PC-9 (cell line): ENCODE measurements at regions of chr12 and their contacts with region 1.

Region 1: DNA sequence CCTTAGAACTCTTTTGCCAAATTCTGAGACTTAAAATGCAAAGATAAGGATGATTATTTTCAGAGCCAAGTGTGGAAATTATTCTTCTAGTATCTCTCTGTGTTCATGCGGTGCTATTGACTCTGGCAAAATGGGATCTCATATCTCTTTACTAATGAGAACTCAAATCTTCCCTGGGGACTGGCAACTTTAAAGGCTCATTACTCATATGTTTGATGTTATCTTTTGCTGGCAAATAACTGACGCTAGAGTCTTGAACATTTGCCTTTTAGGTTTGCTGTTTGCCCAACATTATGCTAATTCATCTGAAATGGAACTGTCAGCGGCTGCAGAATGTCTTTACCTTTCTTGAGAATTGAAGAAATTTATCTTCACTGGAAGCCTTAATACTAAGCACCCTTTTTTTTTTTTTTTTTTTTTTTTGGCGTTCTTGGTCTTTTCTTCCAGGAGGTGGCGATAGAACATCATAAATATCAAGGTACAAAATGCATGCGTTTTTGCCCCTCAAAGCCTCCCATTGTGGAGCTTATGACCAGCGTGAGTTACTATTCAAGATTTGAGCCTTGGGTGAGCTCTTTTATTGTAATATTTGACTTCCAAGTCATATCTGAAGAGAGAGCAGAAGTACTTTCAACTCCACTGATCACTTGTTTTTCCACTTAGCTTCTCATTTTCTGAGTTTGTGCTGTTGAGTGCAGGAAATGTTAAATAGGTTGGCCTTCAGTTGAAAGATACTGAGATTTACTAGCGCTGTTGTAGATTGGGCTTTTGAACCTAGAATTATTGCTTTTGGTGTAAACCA is 86.6 kb downstream of the CAND1 start:
- DNase-seq: peak; percentile 15 to 68
- H3K4me3 ChIP-seq: no peak overlapping the region
- H3K27ac ChIP-seq: no peak overlapping the region
- H3K4me1 ChIP-seq: peaks cover 31% of the 10 kb centered on the region
- H3K27me3 ChIP-seq: no peaks in the 10 kb centered on the region
- CTCF ChIP-seq: peak; percentile 84

Region 2: DNA sequence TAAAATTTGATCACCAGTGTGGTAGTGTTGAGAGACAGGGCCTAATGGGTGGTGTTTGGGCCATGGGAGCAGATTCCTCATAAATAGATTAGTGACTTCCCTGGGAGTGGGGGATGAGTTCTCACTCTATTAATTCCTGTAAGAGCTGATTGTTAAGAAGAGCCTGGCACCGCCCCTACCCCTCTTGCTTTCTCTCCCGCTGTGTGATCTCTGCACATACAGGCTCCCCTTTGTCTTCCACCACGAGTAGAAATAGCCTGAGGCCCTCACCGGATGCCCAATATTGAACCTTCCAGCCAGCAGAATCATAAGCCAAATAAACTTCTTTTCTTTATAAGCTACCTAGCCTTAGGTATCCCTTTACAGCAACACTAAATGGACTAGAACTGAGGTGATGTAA is 118.5 kb before region 1 on chr12:
- CTCF ChIA-PET with region 1: no interaction called
- POLR2A ChIA-PET with region 1: no interaction called
- intact Hi-C with region 1: no loop called
- DNase-seq: no peak
- H3K4me3 ChIP-seq: no peak overlapping the region
- H3K27ac ChIP-seq: no peak overlapping the region
- H3K4me1 ChIP-seq: no peaks in the 10 kb centered on the region
- H3K27me3 ChIP-seq: no peaks in the 10 kb centered on the region
- CTCF ChIP-seq: no peak

Region 3: DNA sequence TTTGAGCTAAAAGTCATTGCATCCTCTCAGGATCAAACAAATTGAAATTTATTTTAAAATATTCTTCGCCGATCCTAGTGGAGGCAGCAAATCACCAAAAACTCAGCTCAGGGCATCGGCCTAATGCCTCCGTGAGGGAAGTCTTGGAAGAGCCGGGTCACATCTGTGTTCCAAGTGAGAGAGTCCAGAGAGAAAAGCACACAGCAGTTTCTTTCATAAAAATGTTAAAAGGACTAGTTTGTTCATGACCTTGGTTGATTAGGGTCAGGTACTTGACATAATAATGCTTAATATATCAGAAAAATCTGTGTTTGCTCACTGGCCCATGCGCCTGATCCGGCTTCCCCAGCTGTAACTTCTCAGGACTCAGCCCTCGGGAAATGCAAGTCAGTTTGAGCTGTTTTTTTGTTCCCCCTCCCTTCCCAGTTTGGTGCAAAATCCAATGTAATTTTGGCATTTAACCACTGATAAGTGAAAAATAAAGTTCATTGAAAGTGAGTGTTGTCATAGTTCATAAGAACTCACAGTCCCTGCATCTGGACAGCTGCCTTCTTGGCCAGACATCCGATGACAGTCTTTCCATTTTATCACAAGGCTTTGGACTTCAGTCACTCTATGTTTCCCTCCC is 75.0 kb after region 1 on chr12:
- CTCF ChIA-PET with region 1: interaction called, 14 read pairs
- POLR2A ChIA-PET with region 1: no interaction called
- intact Hi-C with region 1: no loop called
- DNase-seq: no peak
- H3K4me3 ChIP-seq: no peak overlapping the region
- H3K27ac ChIP-seq: no peak overlapping the region
- H3K4me1 ChIP-seq: peaks cover 40% of the 10 kb centered on the region
- H3K27me3 ChIP-seq: no peaks in the 10 kb centered on the region
- CTCF ChIP-seq: no peak

Region 4: GRCh38 chr12:67482751-67483671 is 127.2 kb after region 1 on chr12:
- CTCF ChIA-PET with region 1: no interaction called
- POLR2A ChIA-PET with region 1: no interaction called
- intact Hi-C with region 1: loop called (anchors 1 kb)
- DNase-seq: peak; percentile 55 to 78
- H3K4me3 ChIP-seq: peak overlapping the region; percentile 19; the same call in 1 of the 2 replicates
- H3K27ac ChIP-seq: peak overlapping the region; percentile 92
- H3K4me1 ChIP-seq: peaks cover 64% of the 10 kb centered on the region
- H3K27me3 ChIP-seq: no peaks in the 10 kb centered on the region
- CTCF ChIP-seq: no peak

Region 5: DNA sequence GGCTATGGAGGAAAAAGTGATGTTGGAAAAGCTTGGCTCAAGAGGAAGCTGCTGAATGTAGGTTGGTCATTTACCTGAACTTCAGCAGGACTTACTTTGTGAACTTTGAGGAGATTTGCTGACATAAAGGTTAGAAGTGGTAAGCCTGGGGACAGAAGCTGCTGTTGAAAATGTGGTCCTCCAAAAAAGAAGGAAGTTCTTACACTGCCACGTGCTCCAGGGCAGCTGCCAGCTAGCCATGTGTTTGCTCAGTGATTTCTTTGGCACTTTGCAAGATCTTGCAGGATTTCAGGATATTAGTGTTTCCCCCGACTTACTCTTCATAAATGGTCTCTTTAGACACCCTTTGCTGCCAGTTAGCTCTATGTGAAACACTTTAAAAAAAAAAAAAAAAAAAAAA is 277.9 kb after region 1 on chr12:
- CTCF ChIA-PET with region 1: no interaction called
- POLR2A ChIA-PET with region 1: no interaction called
- intact Hi-C with region 1: no loop called
- DNase-seq: no peak
- H3K4me3 ChIP-seq: no peak overlapping the region
- H3K27ac ChIP-seq: no peak overlapping the region
- H3K4me1 ChIP-seq: no peaks in the 10 kb centered on the region
- H3K27me3 ChIP-seq: no peaks in the 10 kb centered on the region
- CTCF ChIP-seq: no peak

Region 6: DNA sequence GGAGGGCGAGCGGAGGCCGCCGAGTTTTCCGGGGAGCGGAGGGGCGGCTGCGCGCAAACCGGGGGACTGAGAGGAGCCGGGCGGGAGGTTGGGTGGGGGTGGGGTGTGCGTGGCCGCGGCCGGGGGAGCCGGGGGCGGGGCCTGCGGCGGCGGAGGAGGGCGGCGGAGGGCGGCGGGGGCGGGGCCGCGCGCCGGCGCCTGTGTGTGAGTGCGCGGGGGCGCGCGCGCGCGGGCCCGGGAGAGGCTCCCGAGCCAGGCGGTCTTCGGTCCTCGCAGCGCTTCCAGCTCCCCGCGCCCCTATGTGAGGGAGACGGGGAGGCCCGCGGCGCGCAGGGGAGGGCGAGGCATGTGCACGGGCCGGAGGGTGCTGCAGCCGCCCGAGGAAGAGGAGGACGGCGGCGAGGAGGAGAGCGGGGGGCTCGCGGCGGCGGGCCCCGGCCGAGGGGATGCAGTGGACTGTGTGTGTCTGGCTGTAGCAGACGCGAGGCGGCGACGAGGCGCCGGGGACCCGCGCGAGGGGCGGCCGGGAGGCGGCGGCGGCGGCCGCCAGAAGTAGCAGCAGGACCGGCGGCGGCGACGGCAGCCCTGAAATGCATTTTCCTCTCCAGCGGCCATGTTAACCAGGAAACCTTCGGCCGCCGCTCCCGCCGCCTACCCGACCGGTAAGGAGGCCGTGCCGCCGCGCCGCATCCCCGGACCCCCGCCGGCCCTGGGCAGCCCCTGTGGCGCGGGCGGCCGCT is 292.9 kb after region 1 on chr12 and contains the start of gene DYRK2:
- CTCF ChIA-PET with region 1: interaction called, 5 read pairs
- POLR2A ChIA-PET with region 1: no interaction called
- intact Hi-C with region 1: loop called (anchors 1 kb)
- DNase-seq: peak; percentile 54 to 79
- H3K4me3 ChIP-seq: peak within 1 kb of the TSS; percentile 91
- H3K27ac ChIP-seq: peak within 1 kb of the TSS; percentile 98
- H3K4me1 ChIP-seq: peaks cover 61% of the 10 kb centered on the region
- H3K27me3 ChIP-seq: no peaks in the 10 kb centered on the region
- CTCF ChIP-seq: no peak
- total RNA-seq, gene DYRK2: 42.9 and 55.6 TPM in 2 replicates

Region 7: DNA sequence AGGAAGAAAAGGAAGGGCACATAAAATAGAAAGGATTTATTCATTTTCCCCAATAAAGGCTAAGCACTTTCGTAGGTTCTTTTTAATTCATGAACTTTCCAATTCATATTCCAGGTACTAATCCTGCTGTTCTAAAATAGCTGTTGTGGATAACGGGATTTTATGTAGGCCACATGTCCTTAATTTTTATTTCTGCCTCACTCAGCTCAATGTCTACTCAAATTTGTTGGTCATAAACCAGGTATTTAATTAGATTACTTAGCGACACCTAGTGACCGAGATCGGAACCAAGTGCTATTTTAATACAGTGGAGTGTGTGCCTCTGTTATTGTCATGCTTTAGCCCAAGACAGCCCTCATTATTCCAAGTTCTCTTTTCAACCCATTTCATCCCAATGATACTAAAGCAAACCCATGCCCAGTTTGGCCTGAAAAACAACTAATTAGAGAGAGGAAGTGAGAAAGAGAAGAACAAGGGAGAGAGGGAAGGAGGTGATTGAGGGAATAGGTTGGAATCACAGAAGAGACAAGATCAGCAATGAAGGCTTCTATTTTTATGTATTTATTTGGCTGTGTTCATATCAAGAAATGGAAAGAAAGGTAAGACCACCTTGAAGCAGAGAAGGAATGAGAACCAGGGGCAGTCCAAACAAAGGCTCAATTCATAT is 587.6 kb after region 1 on chr12:
- CTCF ChIA-PET with region 1: interaction called, 25 read pairs
- POLR2A ChIA-PET with region 1: interaction called, 6 read pairs
- intact Hi-C with region 1: loop called (anchors 1 kb)
- DNase-seq: peak; percentile 50 to 52
- H3K4me3 ChIP-seq: no peak overlapping the region
- H3K27ac ChIP-seq: no peak overlapping the region
- H3K4me1 ChIP-seq: peaks cover 41% of the 10 kb centered on the region
- H3K27me3 ChIP-seq: no peaks in the 10 kb centered on the region
- CTCF ChIP-seq: peak; percentile 83

Region 8: DNA sequence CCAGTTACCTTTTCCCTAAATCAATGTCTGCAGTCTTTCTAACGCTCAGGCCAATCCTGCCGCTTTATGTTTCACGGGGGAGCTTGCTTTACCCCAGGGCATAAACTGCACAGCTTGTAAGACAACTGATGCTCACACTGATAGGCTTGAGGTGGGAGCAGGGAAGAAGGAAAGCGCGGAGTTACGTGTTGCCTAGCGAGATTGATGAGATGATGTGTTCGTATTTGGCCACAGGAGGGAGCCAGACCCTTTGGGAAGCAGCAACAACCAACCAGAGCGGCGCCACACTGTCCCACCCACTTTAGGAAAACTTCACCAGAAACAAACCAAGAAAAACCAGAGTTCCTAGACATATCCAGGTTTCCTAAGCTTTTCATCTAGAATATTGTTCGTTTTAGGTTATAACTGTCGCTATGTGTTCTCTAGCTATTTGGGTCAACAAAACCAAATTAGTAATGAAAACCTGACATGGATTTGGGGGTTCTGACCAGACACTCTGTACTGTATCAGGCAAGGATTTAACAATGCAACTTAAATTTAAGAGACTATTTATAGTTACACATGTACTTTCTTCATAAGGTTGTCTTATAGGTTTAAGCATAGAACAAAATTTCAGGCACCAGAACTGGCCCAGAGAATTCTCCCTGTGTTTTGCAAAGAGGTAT is 867.4 kb after region 1 on chr12:
- CTCF ChIA-PET with region 1: no interaction called
- POLR2A ChIA-PET with region 1: no interaction called
- intact Hi-C with region 1: loop called (anchors 1 kb)
- DNase-seq: peak; percentile 62 to 70
- H3K4me3 ChIP-seq: no peak overlapping the region
- H3K27ac ChIP-seq: no peak overlapping the region
- H3K4me1 ChIP-seq: 0 out of 2 replicates have a peak, but pooled peaks cover 11% of the 10 kb centered on the region
- H3K27me3 ChIP-seq: no peaks in the 10 kb centered on the region
- CTCF ChIP-seq: peak; percentile 89